ENCODE measurements at regions of chr9 and their contacts with region 1.

Region 1: DNA sequence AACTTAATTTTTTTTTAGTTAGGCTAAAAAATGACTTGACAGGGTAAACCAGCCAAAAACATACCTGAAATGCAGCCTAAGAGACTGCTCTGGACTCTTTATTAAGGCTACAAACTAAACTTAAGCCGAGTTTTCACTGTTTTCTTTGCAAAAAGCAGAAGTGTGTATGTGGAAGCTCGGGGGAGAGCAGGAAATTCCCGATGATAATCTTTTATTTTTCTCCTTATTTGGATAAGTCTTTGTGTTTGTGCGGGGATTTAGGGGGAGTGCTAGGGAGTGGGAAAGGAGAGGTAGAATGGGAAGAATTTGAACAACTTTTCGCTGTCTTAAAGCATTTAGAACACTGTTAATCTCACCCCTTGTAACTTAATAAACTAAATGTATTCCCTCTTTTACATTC is 30.7 kb upstream of the GPR21 start:
- DNase-seq: peak in 1 of 4 experiments; percentile 13
- ATAC-seq: peak; percentile 66
- H3K4me3 ChIP-seq: no peak overlapping the region
- H3K27ac ChIP-seq: peak overlapping the region; percentile 78
- H3K4me1 ChIP-seq: peaks cover 7 to 25% of the 10 kb centered on the region in 2 experiments; a peak in 4 of 5 replicates
- H3K27me3 ChIP-seq: no peaks in the 10 kb centered on the region
- CTCF ChIP-seq: no peak
- EP300 ChIP-seq: no peak
- POLR2A ChIP-seq: no peak
- RAD21 ChIP-seq: no peak

Region 2: GRCh38 chr9:122827761-122828093 is 175.0 kb before region 1 on chr9:
- CTCF ChIA-PET with region 1: no interaction called
- POLR2A ChIA-PET with region 1: no interaction called
- in situ Hi-C with region 1: no loop called
- intact Hi-C with region 1: loop called (anchors 5 kb)
- DNase-seq: peak in 2 of 4 experiments; percentile 17 to 37
- ATAC-seq: peak; percentile 52
- H3K4me3 ChIP-seq: peak overlapping the region; percentile 85
- H3K27ac ChIP-seq: peak overlapping the region; percentile 91
- H3K4me1 ChIP-seq: peaks cover 10 to 13% of the 10 kb centered on the region in 2 experiments; a peak in 4 of 5 replicates
- H3K27me3 ChIP-seq: no peaks in the 10 kb centered on the region
- CTCF ChIP-seq: no peak
- EP300 ChIP-seq: no peak
- POLR2A ChIP-seq: no peak
- RAD21 ChIP-seq: no peak

Region 3: DNA sequence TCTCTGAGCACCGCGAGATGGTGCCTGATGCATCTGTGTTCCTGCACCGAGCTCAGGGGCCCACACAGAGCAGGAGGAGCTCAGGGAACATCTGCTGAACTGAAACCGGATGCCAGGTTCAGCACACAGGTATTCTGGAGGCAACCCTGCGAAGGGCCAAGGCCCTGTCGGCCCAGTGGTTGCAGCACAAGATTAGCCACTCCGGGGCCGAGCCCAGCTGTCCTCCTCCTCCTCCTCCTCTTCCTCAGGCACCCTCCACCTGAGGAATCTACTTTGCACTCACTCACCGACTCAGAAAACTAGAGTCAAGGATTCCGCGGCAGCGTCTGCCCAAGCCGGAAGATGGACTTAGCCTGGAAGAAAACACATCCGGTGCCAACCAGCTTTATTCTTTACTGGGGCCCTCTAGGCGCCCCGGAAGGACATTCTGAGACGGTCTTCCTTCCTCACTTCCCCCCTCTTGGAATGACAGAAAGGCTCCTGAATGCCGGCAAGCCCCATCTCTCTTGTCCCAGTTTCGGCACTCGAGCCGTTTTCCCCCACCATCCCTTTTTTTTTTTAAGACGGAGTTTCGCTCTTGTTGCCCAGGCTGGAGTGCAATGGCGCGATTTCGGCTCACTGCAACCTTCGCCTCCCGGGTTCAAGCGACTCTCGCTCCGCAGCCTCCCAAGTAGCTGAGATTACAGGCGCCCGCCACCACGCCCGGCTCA is 89.6 kb before region 1 on chr9 and contains the start of gene ZBTB6:
- CTCF ChIA-PET with region 1: no interaction called
- POLR2A ChIA-PET with region 1: no interaction called
- in situ Hi-C with region 1: no loop called
- intact Hi-C with region 1: no loop called
- DNase-seq: peak; percentile 60 to 86 (median 72)
- ATAC-seq: peak; percentile 98
- H3K4me3 ChIP-seq: peak within 1 kb of the TSS; percentile 73
- H3K27ac ChIP-seq: peak within 1 kb of the TSS; percentile 85
- H3K4me1 ChIP-seq: peaks cover 0 to 8% of the 10 kb centered on the region in 2 experiments; a peak in 1 of 5 replicates
- H3K27me3 ChIP-seq: no peaks in the 10 kb centered on the region
- CTCF ChIP-seq: peak in 1 of 3 experiments; percentile 14; a peak in 1 of 6 replicates
- EP300 ChIP-seq: peak; percentile 37; the same call in 1 of the 2 replicates
- POLR2A ChIP-seq: peak; percentile 87
- RAD21 ChIP-seq: no peak; a peak in 1 of 4 replicates
- polyA plus RNA-seq, gene ZBTB6: 1.4 to 4.8 TPM

Region 4: DNA sequence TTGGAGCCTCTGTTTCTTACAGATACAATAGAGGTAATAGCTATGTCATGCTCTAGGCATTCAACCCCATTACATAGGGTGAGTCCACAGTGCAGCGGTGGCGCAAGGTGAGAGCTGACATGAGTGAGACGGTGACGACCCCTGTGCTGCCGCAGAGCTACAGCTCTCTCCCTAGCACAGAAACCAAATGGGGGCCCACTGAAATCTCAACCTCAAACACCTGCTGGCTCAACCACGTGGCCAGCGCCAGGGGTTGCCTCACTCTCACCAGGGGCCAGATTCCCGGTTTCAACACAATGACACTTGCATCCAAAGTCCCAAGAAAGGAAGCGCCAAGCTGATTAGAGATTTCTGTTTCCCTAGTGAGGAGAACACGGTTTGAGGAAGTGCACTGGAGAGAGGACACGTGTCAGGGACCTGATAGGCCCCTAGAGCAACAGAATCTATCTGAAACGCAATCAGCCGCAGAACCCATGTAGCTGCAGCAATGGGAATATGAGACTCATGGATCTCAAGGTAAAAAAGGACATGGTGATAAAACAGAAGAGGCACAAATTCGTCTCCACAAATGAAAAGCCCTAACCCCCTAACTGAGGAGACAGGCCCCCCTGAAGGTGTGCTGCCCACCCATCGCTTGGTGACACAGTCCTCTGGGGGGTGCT is 467.5 kb after region 1 on chr9:
- CTCF ChIA-PET with region 1: no interaction called
- POLR2A ChIA-PET with region 1: no interaction called
- in situ Hi-C with region 1: no loop called
- intact Hi-C with region 1: no loop called
- DNase-seq: peak in 1 of 4 experiments; percentile 29
- ATAC-seq: peak; percentile 65
- H3K4me3 ChIP-seq: no peak overlapping the region
- H3K27ac ChIP-seq: no peak overlapping the region
- H3K4me1 ChIP-seq: peaks cover 11 to 12% of the 10 kb centered on the region in 2 experiments
- H3K27me3 ChIP-seq: no peaks in the 10 kb centered on the region
- CTCF ChIP-seq: no peak
- EP300 ChIP-seq: no peak; the same call in 1 of the 2 replicates
- POLR2A ChIP-seq: no peak
- RAD21 ChIP-seq: no peak